ENCODE measurements at regions of chr6 and their contacts with region 1.

Region 1: DNA sequence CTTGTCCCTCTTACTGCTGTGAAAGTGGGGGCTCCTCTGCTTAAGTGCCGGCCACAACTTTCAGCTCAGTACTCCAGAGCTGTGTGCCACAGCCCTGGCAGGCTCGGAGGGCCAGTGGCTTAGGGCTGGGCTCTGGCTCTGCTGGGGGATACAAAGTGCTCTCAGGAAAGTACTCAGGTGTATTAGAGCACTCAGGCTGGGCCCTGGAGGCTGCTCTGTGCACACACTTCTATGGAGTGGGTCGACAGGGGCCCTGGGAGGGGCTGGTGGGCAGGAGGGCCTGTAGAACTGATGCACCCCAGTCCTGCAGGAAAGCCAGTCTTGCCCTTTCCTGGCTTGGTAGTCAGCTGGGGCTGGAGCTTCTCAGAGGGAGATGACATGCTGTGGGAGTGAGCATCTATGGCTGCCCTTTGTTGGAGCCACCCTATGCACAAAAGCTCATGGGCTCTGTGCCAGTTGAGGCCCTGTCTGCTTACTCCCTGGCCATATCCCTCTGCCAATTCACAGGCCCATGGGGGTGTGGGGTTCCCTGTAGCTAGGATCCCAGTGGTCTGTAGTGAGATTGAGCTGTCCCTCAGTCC is 22.0 kb downstream of the CENPW start:
- DNase-seq: no peak
- H3K4me3 ChIP-seq: no peak overlapping the region
- H3K4me3 Mint-ChIP-seq: no peak overlapping the region
- H3K27ac Mint-ChIP-seq: no peak overlapping the region
- H3K4me1 ChIP-seq: no peaks in the 10 kb centered on the region
- H3K4me1 Mint-ChIP-seq: no peaks in the 10 kb centered on the region
- H3K27me3 ChIP-seq: no peaks in the 10 kb centered on the region
- H3K27me3 Mint-ChIP-seq: no peaks in the 10 kb centered on the region
- CTCF ChIP-seq: no peak

Region 2: DNA sequence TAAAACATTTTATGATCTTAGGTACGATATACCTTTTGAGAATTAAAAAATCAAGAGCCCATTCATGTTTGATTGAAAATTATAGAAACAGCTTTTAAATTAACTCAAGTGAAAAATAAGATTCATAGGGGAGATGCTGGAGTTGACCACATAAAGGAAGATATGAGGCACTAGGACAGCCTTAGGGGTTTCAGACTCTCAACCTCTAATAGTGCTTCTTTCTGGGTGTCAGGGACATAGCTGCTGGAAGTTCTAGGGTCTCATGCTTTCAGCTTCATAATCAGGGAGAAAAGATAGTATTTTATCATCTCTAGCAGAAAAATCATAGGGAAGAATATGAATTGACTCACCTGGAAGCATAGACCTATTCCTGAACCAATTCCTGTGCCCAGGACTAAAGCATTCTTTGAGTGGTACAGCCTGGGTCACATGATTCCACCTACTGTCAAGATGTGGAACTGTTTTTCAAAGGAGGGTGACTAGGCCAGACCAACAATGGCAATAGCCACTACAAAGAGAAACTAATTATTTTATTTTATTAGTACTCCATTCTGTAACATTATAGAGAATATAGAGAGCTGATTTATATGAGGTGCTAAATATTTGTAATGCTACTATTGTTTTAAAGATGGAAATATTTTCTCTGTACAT is 49.8 kb before region 1 on chr6:
- CTCF ChIA-PET with region 1: no interaction called
- POLR2A ChIA-PET with region 1: no interaction called
- intact Hi-C with region 1: no loop called
- DNase-seq: peak in 1 of 2 experiments; percentile 40
- H3K4me3 ChIP-seq: no peak overlapping the region
- H3K4me3 Mint-ChIP-seq: no peak overlapping the region
- H3K27ac Mint-ChIP-seq: no peak overlapping the region
- H3K4me1 ChIP-seq: no peaks in the 10 kb centered on the region
- H3K4me1 Mint-ChIP-seq: no peaks in the 10 kb centered on the region
- H3K27me3 ChIP-seq: no peaks in the 10 kb centered on the region
- H3K27me3 Mint-ChIP-seq: peaks cover 2% of the 10 kb centered on the region
- CTCF ChIP-seq: peak; percentile 32 to 48

Region 3: GRCh38 chr6:126372626-126373025 is 10.7 kb after region 1 on chr6:
- CTCF ChIA-PET with region 1: no interaction called
- POLR2A ChIA-PET with region 1: no interaction called
- intact Hi-C with region 1: no loop called
- DNase-seq: no peak
- H3K4me3 ChIP-seq: no peak overlapping the region
- H3K4me3 Mint-ChIP-seq: no peak overlapping the region
- H3K27ac Mint-ChIP-seq: no peak overlapping the region
- H3K4me1 ChIP-seq: no peaks in the 10 kb centered on the region
- H3K4me1 Mint-ChIP-seq: peaks cover 6% of the 10 kb centered on the region
- H3K27me3 ChIP-seq: no peaks in the 10 kb centered on the region
- H3K27me3 Mint-ChIP-seq: no peaks in the 10 kb centered on the region
- CTCF ChIP-seq: no peak

Region 4: GRCh38 chr6:126657561-126658175 is 295.7 kb after region 1 on chr6:
- CTCF ChIA-PET with region 1: no interaction called
- POLR2A ChIA-PET with region 1: no interaction called
- intact Hi-C with region 1: loop called (anchors 2 kb)
- DNase-seq: peak in 1 of 2 experiments; percentile 8
- H3K4me3 ChIP-seq: no peak overlapping the region
- H3K4me3 Mint-ChIP-seq: no peak overlapping the region
- H3K27ac Mint-ChIP-seq: no peak overlapping the region
- H3K4me1 ChIP-seq: no peaks in the 10 kb centered on the region
- H3K4me1 Mint-ChIP-seq: no peaks in the 10 kb centered on the region
- H3K27me3 ChIP-seq: no peaks in the 10 kb centered on the region
- H3K27me3 Mint-ChIP-seq: no peaks in the 10 kb centered on the region
- CTCF ChIP-seq: peak; percentile 20 to 25

Region 5: DNA sequence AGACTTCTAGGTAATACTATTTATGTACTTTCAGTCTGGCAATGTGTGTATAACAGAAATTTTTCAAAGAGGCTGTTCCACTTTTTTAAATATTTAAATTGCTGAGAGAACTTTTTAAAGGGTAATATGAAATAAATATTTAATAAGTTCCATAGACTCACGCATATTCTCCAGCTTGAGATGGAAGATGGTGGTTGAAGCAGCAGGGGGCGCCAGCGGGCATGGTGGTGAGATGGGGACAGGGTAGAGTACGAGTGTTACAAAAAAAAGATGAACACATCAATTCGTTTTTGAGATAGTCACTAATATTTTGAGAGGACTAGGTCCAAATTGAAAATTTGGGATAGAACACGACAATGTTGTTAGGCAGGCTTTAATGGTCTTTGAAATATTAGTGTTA is 825.0 kb after region 1 on chr6:
- CTCF ChIA-PET with region 1: no interaction called
- POLR2A ChIA-PET with region 1: no interaction called
- intact Hi-C with region 1: loop called (anchors 1 kb)
- DNase-seq: peak; percentile 48 to 69
- H3K4me3 ChIP-seq: no peak overlapping the region
- H3K4me3 Mint-ChIP-seq: no peak overlapping the region
- H3K27ac Mint-ChIP-seq: no peak overlapping the region
- H3K4me1 ChIP-seq: no peaks in the 10 kb centered on the region
- H3K4me1 Mint-ChIP-seq: no peaks in the 10 kb centered on the region
- H3K27me3 ChIP-seq: no peaks in the 10 kb centered on the region
- H3K27me3 Mint-ChIP-seq: peaks cover 3% of the 10 kb centered on the region
- CTCF ChIP-seq: peak; percentile 48 to 54

Measured in Caco-2 (cell line).